ENCODE measurements at regions of chr6 and their contacts with region 1.

Region 1: GRCh38 chr6:1609648-1610496 is at the start of gene FOXC1:
- DNase-seq: peak; percentile 66
- H3K4me3 ChIP-seq: peak within 1 kb of the TSS; percentile 54
- CTCF ChIP-seq: no peak

Region 2: GRCh38 chr6:2196079-2196679 is 586.3 kb after region 1 on chr6:
- in situ Hi-C with region 1: loop called (anchors 10 kb)
- DNase-seq: peak; percentile 43
- H3K4me3 ChIP-seq: no peak overlapping the region
- CTCF ChIP-seq: peak; percentile 69

Region 3: DNA sequence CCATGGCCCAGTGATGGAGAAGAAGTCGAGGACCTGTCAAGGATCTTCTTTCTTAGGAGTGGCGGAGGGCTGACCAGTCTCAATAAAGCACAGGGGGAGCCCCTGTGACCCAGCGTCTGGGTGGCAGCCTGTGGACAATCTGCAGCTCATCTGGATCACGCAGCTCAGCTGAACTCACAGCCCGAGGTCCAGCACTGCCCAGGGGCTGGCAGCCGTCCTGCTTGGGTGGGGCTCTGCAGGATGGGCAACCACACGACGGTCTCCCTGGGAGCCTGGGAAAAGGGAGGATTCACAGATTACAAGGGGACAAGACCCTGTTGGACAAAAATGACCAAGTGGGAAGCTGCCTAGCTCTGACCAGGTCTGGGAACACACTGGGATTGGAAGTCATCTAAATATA is 1030.0 kb after region 1 on chr6:
- in situ Hi-C with region 1: loop called (anchors 5 kb)
- DNase-seq: no peak
- H3K4me3 ChIP-seq: no peak overlapping the region
- CTCF ChIP-seq: no peak

Measured in astrocyte of the cerebellum (primary cell).